ENCODE measurements at regions of chr21 and their contacts with region 1.

Region 1: DNA sequence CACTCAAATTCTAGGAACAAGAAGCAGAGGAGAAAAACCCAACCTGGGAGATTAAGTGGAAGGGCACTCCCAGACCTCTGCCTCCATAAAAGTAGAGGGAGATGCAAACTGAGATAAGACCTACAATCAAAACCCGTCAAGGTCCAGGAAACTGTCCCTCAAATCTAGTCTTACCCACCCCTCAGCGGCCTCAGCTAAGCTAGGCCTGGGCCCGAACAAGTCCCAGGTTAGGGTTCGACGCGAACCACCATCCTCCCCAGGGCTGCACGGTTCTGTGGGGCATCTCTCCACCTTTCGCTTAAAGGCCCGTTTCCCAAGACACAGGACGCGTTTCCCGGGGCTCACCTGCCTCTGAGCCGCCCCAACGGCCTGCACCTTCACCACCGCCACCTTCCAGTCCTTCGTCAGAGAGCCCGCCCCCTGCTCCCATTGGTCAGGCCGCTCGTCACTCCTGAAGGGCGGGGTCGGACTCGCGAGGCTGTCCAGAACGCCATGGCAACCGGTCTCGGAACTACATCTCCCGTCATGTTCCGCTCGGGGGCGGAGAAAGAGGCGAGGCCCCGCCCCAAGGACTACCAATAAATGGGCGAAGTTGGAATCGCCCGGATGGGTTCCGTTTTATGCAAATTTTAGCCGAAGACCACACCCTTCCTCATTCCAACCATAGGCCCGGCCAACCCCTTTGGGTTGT is at the start of gene CRYZL1:
- DNase-seq: peak; percentile 100
- H3K4me3 Mint-ChIP-seq: peak within 1 kb of the TSS; percentile 91
- H3K27ac Mint-ChIP-seq: peak within 1 kb of the TSS; percentile 94
- H3K4me1 Mint-ChIP-seq: peaks cover 21% of the 10 kb centered on the region
- H3K27me3 Mint-ChIP-seq: peaks cover 17% of the 10 kb centered on the region
- total RNA-seq, gene CRYZL1: 30.3 to 32.7 TPM

Region 2: DNA sequence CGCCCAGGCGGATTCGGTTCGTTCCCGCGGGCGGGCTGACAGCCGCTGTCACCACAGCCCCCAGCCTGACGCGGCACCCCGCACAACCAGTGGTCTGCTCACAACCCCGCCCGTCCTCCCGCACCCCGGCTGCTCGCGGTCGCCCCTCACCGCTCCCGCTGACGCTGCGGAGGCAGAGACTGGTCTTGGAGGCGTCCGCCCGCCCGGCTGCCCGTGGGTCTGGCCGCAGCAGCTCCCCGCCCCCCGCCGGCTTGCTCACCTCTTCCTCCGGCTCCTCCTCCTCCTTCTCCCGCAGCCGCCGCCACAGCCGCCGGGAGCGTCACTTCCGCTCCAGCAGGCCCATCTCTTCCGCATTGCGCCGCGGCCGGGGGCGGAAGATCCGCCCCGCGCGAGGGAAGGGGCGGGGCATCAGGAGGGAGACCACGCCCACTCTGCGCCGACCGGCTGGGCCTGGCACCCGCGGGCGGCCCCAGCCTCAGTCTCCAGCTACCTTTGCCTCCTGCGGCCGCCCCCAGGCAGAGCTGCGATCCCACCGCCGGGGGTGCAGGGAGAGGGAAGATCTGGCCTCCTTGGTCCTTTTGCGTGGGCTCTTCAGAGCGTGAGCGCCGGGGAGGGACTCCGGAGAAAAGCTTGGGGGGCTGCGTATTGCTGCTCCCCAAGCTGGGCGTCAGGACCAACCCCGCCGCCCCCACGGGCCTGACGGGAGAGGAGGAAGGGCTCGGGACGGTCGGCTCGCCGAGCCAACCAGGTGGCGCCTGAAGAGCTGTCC is 913.6 kb before region 1 on chr21 and contains the start of gene SYNJ1:
- CTCF ChIA-PET with region 1: no interaction called
- intact Hi-C with region 1: loop called (anchors 5 kb)
- DNase-seq: peak; percentile 94
- H3K4me3 Mint-ChIP-seq: peak within 1 kb of the TSS; percentile 96
- H3K27ac Mint-ChIP-seq: peak within 1 kb of the TSS; percentile 88
- H3K4me1 Mint-ChIP-seq: peaks cover 45% of the 10 kb centered on the region
- H3K27me3 Mint-ChIP-seq: no peaks in the 10 kb centered on the region
- total RNA-seq, gene SYNJ1: 7.4 to 10.9 TPM

Region 3: DNA sequence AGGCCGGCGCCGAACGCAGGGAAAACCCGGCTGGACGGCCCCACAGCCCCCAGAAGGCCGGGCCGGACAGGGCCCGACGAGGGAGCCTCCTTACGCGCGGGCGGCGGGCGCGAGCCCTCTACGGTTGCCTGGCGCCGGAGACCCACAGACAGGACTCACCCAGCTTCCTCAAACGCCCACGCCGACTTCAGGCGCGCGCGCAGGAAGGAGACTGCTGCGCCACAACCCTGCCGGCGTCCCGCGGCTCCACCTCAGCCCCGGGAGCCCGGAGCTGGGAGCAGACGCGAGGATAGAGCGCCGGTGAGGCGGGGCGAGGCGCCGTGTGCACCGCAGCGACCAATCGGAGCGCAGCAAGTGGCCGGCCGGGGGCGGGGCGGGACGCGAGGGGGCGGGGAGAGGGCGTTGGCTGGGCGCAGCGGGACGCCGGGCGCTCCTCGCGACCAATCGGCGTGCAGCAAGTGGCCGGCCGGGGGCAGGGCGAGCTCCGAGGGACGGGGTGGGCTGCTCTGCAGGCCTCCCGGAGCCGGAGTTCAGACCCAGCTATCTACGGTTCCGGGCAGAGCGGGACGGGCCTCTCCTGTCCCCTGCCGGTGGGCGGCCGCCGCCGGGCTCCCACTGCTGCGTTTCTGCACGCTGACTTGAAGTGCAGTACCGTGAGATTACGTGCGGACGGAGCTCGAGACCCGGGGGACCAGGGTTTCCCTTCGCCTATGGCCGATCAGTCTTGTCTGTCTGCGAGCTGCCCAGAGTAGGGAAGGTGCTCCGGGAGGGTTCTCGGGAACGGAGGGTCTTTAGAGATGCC is 161.6 kb before region 1 on chr21 and contains the start of gene TMEM50B:
- CTCF ChIA-PET with region 1: no interaction called
- intact Hi-C with region 1: loop called (anchors 1 kb)
- DNase-seq: peak; percentile 96
- H3K4me3 Mint-ChIP-seq: peak within 1 kb of the TSS; percentile 89
- H3K27ac Mint-ChIP-seq: peak within 1 kb of the TSS; percentile 68
- H3K4me1 Mint-ChIP-seq: peaks cover 15% of the 10 kb centered on the region
- H3K27me3 Mint-ChIP-seq: no peaks in the 10 kb centered on the region
- total RNA-seq, gene TMEM50B: 17.8 to 18.2 TPM

Region 4: DNA sequence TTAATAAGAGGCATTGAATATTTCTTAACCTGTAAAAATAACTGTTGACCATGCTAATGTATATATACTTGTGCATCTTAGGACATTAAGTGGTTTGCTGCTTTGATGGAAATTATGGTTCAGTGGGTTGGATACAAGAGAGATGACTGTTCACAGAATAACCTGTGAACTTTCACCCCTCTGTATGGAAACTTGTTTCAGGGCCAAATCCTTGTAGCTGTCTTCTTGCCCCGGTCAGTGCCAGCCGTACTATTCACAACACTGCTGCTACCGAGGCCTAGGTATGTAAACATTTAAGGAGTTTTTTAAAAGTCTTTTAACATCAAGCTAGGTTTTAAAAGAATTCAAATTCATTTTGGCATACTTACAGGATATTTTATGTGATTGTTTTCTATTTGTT is 69.1 kb before region 1 on chr21:
- CTCF ChIA-PET with region 1: no interaction called
- intact Hi-C with region 1: no loop called
- DNase-seq: no peak
- H3K4me3 Mint-ChIP-seq: no peak overlapping the region
- H3K27ac Mint-ChIP-seq: no peak overlapping the region
- H3K4me1 Mint-ChIP-seq: peaks cover 19% of the 10 kb centered on the region
- H3K27me3 Mint-ChIP-seq: no peaks in the 10 kb centered on the region

Region 5: DNA sequence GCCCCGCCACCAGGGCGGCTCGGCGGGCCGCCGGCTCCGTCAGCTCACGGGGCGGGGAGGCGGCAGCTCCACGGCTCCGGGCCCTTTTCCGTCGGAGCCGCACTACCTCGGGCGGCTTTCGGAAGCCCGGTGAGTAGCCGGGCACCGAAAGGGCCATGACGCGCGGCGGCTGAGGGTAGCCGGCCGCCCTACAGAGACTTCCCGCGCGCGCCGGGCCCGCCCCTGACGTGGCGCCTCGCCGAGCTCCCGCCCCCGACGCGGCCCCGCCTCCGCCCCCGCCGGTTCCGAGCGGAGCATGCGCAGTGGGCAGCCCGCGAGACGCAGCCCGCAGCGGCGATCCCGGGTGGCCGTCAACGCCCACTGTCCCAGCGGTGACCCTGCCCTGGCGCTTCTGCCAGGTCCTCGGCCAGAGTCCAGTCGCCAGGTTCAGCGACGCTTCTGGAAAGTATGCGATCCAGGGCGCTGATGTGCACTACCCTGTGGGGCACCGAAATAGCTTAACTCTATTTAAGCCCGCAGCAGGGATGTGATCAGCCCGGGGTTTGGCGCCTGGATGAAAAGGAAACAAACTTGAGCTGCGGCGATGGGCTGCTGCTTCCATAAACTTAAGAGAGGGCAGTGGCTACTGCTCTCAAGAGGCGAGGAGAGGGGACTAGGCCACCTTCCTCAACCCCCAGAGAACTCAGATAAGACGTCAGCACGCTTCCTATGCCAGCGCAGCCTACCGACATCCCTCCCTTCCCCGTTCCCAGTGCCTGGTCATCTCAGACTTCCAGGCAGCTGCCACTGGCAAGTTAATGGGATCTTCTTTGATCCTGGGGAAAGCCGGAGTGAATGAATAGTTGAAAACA is 52.8 kb before region 1 on chr21 and contains the start of gene DONSON:
- CTCF ChIA-PET with region 1: no interaction called
- intact Hi-C with region 1: loop called (anchors 1 kb)
- DNase-seq: peak; percentile 82
- H3K4me3 Mint-ChIP-seq: peak within 1 kb of the TSS; percentile 91
- H3K27ac Mint-ChIP-seq: peak within 1 kb of the TSS; percentile 77
- H3K4me1 Mint-ChIP-seq: peaks cover 15% of the 10 kb centered on the region
- H3K27me3 Mint-ChIP-seq: no peaks in the 10 kb centered on the region
- total RNA-seq, gene DONSON: 35.6 to 42.4 TPM

Region 6: DNA sequence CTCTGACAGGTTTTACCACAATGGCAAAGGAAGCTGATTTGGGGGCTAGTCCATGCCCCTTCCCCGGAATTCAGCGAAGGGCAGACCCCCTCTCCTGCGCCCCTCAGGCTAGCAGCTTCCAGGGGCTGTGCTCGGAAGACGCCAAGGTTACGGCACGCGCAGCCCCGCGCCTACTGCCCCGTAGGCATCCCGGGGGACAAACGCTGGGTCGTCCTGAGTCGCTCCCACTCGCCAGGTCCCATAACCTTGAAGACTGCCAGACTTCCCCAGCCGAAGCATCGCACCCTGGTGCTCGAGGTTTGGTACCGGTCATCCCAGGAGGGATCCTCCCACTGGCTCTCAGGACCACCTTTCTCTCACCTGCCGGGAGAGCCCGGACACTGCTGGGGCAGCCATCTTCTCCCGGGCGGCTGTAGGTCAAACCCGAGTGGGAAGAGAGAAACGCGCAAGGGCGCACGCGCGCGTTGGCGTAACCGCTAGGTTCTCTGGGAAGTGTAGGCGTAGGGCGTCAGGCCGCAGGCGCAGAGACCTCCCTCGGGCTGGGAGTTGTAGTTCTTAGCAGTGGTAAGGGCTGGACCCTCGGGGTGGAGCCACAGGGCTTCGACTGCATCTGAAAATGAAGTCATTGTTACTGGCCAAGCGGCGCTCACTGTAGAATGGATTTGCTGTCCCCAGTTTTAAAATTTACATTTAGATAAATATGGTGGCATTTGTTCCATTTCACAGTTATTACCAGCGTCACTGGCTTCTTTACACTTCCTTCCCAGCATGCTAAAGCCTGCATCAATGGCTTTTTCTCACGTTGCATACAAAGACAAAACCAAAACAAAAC is 274.1 kb after region 1 on chr21 and contains the start of gene ATP5PO:
- CTCF ChIA-PET with region 1: no interaction called
- intact Hi-C with region 1: loop called (anchors 1 kb)
- DNase-seq: peak; percentile 98
- H3K4me3 Mint-ChIP-seq: peak within 1 kb of the TSS; percentile 98
- H3K27ac Mint-ChIP-seq: peak within 1 kb of the TSS; percentile 95
- H3K4me1 Mint-ChIP-seq: peaks cover 27% of the 10 kb centered on the region
- H3K27me3 Mint-ChIP-seq: no peaks in the 10 kb centered on the region
- total RNA-seq, gene ATP5PO: 230 TPM

Region 7: GRCh38 chr21:34202553-34203372 is 561.3 kb after region 1 on chr21:
- CTCF ChIA-PET with region 1: no interaction called
- intact Hi-C with region 1: loop called (anchors 10 kb)
- DNase-seq: no peak
- H3K4me3 Mint-ChIP-seq: peak overlapping the region; percentile 61
- H3K27ac Mint-ChIP-seq: no peak overlapping the region
- H3K4me1 Mint-ChIP-seq: peaks cover 43% of the 10 kb centered on the region
- H3K27me3 Mint-ChIP-seq: no peaks in the 10 kb centered on the region